Colonic mucosa (tissue), 4 donors: ENCODE measurements at regions of chr15 and their contacts with region 1.

Region 1: DNA sequence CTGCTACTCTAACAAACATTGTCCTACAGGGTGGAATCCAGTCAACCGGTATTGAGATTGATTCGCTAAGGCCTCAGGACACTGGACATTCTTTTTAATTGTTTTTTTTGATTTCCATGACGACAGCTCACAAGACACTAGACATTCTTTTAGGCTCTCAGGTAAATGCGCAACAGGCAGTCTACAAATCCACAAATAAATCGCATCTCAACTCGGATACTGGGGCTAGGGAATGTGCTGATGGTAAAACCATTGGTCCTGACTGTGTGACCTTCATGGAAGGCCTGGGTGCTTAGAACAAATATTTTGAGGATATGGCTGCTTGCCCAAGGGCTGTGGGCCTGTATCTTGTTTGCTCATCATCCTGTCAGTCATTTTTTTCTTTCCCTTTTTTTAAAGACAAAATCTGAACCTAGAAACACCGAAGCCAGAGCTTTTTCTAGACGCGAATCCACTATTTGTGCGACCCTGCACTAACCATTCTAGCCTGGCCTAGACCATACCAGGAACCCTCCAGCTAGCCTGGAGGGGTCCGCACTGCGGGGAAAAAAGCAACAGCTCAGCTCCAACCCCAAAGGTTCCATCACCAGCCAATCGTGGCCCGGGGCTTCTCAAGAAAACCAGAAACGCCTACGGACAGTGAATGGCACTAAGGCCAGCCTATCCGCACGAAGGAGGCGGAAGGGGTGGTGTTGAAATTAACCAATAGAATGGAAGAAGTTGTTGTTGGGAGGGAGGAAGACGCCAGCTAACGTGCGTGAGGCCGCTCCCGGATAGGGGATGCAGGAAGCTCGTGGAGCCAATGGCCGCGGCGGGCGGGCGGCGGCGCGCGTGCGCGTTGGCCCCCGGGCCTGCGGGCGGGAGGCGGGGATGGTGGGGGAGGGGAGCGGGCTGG is 18.1 kb upstream of the CHD2 start:
- DNase-seq: peak; percentile 99
- H3K4me3 ChIP-seq: peak overlapping the region; percentile 29
- H3K27ac ChIP-seq: peak overlapping the region; percentile 96
- H3K4me1 ChIP-seq: peaks cover 12% of the 10 kb centered on the region
- H3K27me3 ChIP-seq: no peaks in the 10 kb centered on the region
- CTCF ChIP-seq: no peak

Region 2: GRCh38 chr15:92733934-92734521 is 148.0 kb before region 1 on chr15:
- intact Hi-C with region 1: no loop called
- DNase-seq: no peak
- H3K4me3 ChIP-seq: peak overlapping the region; percentile 37
- H3K27ac ChIP-seq: no peak overlapping the region
- H3K4me1 ChIP-seq: no peaks in the 10 kb centered on the region
- H3K27me3 ChIP-seq: no peaks in the 10 kb centered on the region
- CTCF ChIP-seq: no peak

Region 3: GRCh38 chr15:92819278-92820235 is 62.5 kb before region 1 on chr15:
- intact Hi-C with region 1: loop called (anchors 5 kb)
- DNase-seq: no peak
- H3K4me3 ChIP-seq: peak overlapping the region; percentile 10
- H3K27ac ChIP-seq: peak overlapping the region; percentile 86
- H3K4me1 ChIP-seq: peaks cover 7% of the 10 kb centered on the region
- H3K27me3 ChIP-seq: no peaks in the 10 kb centered on the region
- CTCF ChIP-seq: no peak

Region 4: DNA sequence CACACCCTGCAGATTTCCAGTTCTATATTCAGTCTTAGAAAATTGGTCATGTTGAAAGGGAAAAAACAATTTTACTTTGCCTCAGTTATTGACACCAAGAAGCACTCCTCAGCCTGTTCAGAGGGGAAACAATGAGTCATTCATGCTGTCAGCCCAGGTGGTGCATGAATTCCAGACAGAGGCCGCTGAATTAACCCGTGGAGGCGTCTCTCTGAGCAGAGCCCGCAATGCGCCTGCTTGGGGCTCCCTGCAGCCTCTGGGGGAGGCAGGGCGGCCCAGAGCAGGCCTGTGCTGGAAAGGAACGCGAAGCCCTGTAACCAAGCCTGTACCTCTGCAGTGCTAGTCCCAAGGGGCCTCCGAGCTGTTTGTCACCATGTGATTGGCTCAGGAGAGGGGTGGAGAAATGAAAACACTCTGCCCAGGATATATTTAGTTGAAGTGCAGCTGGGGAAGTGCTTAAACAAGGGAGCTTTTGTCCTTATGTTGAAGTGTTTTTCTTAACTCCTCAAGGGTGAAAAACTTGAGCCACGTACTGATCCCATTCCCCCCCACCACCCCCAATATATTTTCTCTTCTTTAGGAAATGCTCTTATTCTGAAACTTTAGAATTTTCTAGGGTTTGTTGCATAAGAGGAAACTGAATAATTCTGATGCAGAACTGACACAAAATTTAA is 50.3 kb before region 1 on chr15:
- intact Hi-C with region 1: loop called (anchors 5 kb)
- DNase-seq: peak; percentile 89
- H3K4me3 ChIP-seq: no peak overlapping the region
- H3K27ac ChIP-seq: peak overlapping the region; percentile 93
- H3K4me1 ChIP-seq: peaks cover 10% of the 10 kb centered on the region
- H3K27me3 ChIP-seq: no peaks in the 10 kb centered on the region
- CTCF ChIP-seq: no peak